Lower leg skin (tissue), 4 donors: ENCODE measurements at regions of chr16 and their contacts with region 1.

Region 1: GRCh38 chr16:15829460-15829859 is 27.4 kb downstream of the MYH11 start:
- DNase-seq: peak; percentile 40 to 87
- H3K4me3 ChIP-seq: no peak overlapping the region
- CTCF ChIP-seq: no peak
- POLR2A ChIP-seq: no peak

Region 2: GRCh38 chr16:15765880-15766279 is 63.6 kb before region 1 on chr16:
- intact Hi-C with region 1: loop called (anchors 10 kb)
- DNase-seq: no peak
- H3K4me3 ChIP-seq: no peak overlapping the region
- CTCF ChIP-seq: no peak
- POLR2A ChIP-seq: no peak